Activated CD4-positive, alpha-beta memory T cell treated with anti-CD3 and anti-CD28 coated beads for 36 hours (primary cell): ENCODE measurements at regions of chr11 and their contacts with region 1.

Region 1: DNA sequence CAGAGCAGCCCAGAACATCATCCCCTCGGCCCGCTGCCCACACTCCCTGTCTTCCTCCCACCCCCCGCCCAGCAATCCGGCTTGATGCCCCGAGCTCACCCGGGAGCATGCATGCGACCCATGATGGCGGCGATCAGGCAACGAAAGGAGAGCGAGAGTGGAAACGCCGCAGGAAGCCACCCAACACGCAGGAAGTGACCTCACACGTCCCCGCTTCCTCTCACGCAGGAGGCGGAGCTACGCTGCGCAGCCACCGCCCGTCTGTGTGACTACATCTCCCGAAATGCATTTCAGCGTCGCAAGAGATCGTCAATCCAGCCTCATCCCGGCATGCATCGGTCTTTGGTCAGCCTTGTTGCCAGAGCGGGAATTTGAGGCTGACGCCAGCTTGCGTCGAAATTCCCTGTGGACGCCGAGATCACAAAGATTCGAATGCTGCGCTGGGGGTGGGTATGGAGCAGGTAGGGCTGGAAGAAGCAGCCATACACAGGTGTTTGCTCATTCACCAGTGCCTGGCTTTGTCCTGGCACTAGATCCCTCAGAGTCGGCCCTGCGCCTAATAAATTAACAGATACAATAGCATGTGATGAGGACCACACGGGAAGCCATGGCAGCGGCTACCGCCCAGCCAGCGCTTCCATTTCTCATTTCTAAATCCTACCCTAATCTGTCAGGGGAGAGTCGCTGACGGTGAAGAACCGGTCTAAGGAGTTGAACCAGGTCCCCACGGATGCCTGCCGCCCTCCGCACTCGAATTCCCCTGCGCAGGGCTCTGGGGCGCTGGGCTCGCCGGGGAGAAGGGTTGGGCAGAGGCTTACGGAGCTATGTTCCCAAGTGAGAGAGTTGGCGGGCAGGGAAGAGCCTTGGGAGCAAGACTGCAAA is at the start of gene RPS13:
- DNase-seq: peak; percentile 97
- H3K4me3 Mint-ChIP-seq: peak within 1 kb of the TSS; percentile 96
- H3K27ac Mint-ChIP-seq: peak within 1 kb of the TSS; percentile 93
- H3K4me1 Mint-ChIP-seq: peaks cover 34% of the 10 kb centered on the region
- H3K27me3 Mint-ChIP-seq: no peaks in the 10 kb centered on the region
- total RNA-seq, gene RPS13: 1,729 to 1,745 TPM

Region 2: GRCh38 chr11:16738193-16738946 is 339.4 kb before region 1 on chr11 and contains the start of gene C11orf58:
- CTCF ChIA-PET with region 1: no interaction called
- POLR2A ChIA-PET with region 1: interaction called, 4 read pairs
- intact Hi-C with region 1: loop called (anchors 1 kb)
- DNase-seq: peak; percentile 97
- H3K4me3 Mint-ChIP-seq: no peak within 1 kb of the TSS
- H3K27ac Mint-ChIP-seq: no peak within 1 kb of the TSS
- H3K4me1 Mint-ChIP-seq: peaks cover 22% of the 10 kb centered on the region
- H3K27me3 Mint-ChIP-seq: no peaks in the 10 kb centered on the region
- total RNA-seq, gene C11orf58: 132 to 134 TPM

Region 3: DNA sequence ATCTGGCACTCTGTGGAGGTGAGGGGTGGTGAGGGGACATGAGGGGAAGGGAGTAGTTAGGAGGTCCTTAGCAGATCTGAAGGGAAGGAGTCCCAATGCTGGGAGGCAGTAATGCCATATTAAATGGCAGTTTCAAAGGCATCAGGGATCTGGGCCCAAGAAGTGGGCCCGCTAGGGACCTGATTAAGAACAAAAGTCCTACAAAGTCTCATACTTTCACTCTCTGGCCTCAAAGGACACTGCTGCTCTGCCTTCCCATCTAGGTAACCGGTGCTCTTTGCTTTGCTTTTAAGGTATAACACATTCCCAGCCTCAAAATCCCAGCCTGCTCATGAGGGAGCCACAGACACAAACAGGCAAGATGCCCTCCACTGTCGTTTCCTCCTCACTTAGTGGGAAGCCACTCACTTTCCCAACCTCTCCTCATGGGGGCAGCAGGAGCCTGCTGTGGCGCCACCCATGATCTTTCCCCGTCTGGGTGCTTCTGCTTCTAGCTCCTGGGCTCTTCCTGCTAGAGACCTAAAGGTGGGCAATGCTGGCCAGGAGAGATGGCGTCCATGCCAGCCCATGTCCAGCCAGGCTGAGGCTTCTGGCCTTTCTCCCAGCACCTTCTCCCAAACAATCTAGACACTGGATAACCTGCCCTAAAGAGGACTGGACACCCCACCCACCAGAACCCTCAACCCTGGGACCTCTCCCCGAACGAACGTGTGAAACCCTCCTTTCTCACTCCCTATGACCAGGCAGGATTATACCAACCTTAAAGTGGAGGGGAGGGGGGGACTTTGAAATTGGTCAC is 131.9 kb before region 1 on chr11:
- CTCF ChIA-PET with region 1: interaction called, 5 read pairs
- POLR2A ChIA-PET with region 1: no interaction called
- intact Hi-C with region 1: loop called (anchors 5 kb)
- DNase-seq: peak; percentile 71
- H3K4me3 Mint-ChIP-seq: no peak overlapping the region
- H3K27ac Mint-ChIP-seq: no peak overlapping the region
- H3K4me1 Mint-ChIP-seq: peaks cover 9% of the 10 kb centered on the region
- H3K27me3 Mint-ChIP-seq: no peaks in the 10 kb centered on the region

Region 4: GRCh38 chr11:17046690-17047089 is 31.1 kb before region 1 on chr11:
- CTCF ChIA-PET with region 1: no interaction called
- POLR2A ChIA-PET with region 1: no interaction called
- intact Hi-C with region 1: no loop called
- DNase-seq: no peak
- H3K4me3 Mint-ChIP-seq: no peak overlapping the region
- H3K27ac Mint-ChIP-seq: no peak overlapping the region
- H3K4me1 Mint-ChIP-seq: no peaks in the 10 kb centered on the region
- H3K27me3 Mint-ChIP-seq: no peaks in the 10 kb centered on the region

Region 5: DNA sequence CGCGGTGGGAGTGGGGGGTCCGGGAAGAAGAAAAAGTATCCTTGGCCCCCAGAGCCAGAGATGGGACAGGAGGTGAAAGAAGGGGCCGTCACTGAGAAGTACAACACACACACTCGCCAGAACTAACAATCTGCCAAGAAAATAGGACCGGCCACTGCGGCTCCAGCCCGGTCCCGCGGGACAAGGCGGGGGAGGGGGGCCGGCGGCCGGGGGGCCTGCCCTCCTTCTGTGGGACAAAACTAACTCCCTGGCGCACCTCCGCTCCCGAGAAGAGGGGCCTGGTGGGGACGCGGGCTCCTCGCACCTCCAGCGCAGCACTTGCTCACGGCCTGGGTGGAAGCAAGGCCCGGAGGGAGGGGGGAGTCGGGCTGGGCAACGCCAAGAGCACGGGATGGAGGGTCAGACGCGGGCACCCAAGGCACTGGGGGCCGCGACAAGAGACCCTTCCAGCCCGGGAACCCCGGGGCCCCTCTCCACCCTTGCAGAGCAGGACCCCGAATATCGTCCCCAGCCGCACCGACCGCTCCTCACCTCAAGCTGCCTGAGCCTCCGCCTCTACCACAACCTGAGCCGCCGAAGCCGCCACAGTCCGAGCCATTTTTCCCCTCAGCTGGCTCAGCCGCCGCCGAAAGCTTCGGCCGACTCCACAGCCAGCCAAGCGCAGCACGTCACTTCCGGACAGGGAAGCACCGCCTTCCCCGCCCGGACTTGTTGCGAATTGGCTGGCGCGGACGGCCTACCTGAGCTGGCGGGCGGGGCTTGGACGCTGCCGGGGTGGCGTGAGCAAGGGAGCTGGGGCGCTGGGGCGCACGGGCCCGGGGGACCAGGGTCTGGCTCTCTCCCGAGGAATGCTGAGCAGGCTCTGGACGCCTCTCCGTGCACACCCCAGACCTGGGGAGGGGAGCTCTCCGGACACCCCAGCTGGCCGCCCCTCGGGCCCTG is 129.8 kb after region 1 on chr11 and contains the start of gene PIK3C2A:
- CTCF ChIA-PET with region 1: interaction called, 3 read pairs
- POLR2A ChIA-PET with region 1: interaction called, 18 read pairs
- intact Hi-C with region 1: loop called (anchors 1 kb)
- DNase-seq: peak; percentile 96
- H3K4me3 Mint-ChIP-seq: peak within 1 kb of the TSS; percentile 99
- H3K27ac Mint-ChIP-seq: peak within 1 kb of the TSS; percentile 90
- H3K4me1 Mint-ChIP-seq: peaks cover 35% of the 10 kb centered on the region
- H3K27me3 Mint-ChIP-seq: no peaks in the 10 kb centered on the region
- total RNA-seq, gene PIK3C2A: 21.2 to 21.7 TPM

Region 6: DNA sequence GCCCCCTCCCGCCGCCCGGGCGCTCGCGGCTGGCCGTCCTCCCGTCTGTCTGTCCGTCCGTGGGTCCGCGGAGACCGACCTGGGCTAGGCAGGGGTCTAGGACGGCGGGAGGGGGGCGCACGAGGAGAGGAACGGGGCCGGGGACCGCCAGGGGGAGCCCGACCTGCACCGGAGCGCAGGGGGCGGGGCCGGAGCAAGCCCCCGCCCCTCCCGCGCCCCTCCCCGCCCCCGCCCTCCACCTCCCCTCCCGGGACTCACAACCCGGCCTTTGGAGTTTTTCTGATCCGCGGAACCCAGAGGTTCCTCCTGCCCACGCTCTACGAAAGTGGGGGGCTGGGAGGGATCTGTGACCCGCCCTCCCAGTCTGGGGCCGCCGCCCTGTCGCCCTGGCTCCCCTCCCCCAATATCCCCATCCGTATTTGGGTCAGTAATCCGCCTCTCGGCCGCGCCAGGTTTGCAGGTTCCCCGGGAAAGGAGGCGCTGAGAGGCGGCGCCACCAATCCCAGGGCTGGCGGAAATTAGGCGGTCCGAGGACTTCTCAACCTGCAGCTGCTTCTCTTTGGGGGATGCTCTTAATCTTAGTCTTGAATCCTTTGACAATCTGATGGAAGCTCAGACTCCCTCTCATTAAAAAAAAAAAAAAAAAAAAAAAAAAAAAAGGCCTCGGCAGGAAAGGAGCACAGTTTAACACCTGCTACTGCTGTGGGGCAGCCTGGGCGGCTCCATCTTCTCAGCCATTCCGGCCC is 311.6 kb after region 1 on chr11:
- CTCF ChIA-PET with region 1: no interaction called
- POLR2A ChIA-PET with region 1: no interaction called
- intact Hi-C with region 1: loop called (anchors 5 kb)
- DNase-seq: peak; percentile 78
- H3K4me3 Mint-ChIP-seq: peak overlapping the region; percentile 61
- H3K27ac Mint-ChIP-seq: no peak overlapping the region
- H3K4me1 Mint-ChIP-seq: no peaks in the 10 kb centered on the region
- H3K27me3 Mint-ChIP-seq: peaks cover 4% of the 10 kb centered on the region